ENCODE measurements at regions of chr18 and their contacts with region 1.

Region 1: GRCh38 chr18:43571078-43571689 is 293.9 kb upstream of the SYT4 start:
- DNase-seq: peak; percentile 52 to 77 (median 68)
- H3K4me3 ChIP-seq: no peak overlapping the region
- H3K27ac ChIP-seq: no peak overlapping the region
- H3K4me1 ChIP-seq: no peaks in the 10 kb centered on the region
- H3K27me3 ChIP-seq: peaks cover 0 to 2% (median 0%) of the 10 kb centered on the region in 5 experiments

Region 2: GRCh38 chr18:43581936-43582519 is 10.8 kb after region 1 on chr18:
- CTCF ChIA-PET with region 1: interaction called, 349 read pairs
- POLR2A ChIA-PET with region 1: no interaction called
- DNase-seq: peak in 1 of 3 donors; percentile 11
- H3K4me3 ChIP-seq: no peak overlapping the region
- H3K27ac ChIP-seq: no peak overlapping the region
- H3K4me1 ChIP-seq: peaks cover 0 to 8% (median 0%) of the 10 kb centered on the region in 4 experiments
- H3K27me3 ChIP-seq: peaks cover 0 to 2% (median 0%) of the 10 kb centered on the region in 5 experiments

Region 3: DNA sequence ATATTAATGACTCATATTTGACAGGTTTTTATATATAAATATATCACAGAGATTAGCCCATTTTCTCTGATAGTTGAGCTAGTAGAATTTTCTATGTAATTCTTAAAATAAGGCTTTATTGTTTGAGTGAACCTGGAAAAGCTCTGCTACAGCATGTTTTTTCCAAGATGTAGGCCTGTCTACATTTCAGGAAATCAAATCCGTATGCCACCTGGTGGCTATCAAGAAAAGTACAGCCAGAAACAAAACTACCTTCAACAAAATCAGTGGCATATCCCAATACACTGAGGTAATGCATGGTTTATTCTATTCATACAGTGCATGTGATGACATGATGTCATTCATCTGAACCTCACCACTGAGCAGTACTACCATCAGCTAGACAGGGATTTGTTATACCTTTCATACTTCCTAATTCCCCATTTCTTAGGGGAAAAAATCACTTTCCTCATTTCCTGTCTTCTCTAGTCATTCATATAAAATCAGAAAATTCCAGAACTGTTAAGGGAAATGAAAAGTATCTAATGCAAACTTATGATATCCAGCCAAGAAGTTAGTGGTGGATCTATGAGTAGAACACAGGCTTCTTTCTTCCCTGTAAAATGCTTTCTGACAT is 16.5 kb after region 1 on chr18:
- CTCF ChIA-PET with region 1: interaction called, 349 read pairs
- POLR2A ChIA-PET with region 1: interaction called, 4 read pairs
- DNase-seq: peak; percentile 37 to 56 (median 52)
- H3K4me3 ChIP-seq: no peak overlapping the region
- H3K27ac ChIP-seq: no peak overlapping the region
- H3K4me1 ChIP-seq: no peaks in the 10 kb centered on the region
- H3K27me3 ChIP-seq: no peaks in the 10 kb centered on the region